ENCODE measurements at regions of chr22 and their contacts with region 1.

Region 1: DNA sequence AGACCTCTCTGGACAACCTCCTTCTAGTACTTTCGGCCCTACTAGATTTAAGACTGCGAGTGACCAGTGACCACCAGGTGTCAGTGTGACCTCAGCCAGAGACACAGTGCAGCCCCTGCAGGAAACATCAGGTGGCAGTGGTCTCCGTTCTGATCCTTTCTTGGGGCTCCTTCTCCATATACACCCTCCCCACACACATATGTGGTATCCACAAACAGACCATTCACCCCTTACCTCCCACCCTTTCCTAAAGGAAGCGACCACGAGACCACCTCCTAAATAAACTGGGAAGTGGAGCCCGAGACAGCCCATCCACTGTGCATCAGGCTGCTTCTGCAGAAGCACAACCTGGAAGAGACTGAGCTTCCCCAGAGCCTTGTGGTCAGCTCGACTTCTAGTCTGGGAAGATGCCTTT is 38.5 kb upstream of the CYP2D6 start:
- DNase-seq: peak; percentile 77
- H3K4me3 Mint-ChIP-seq: no peak overlapping the region
- H3K27ac Mint-ChIP-seq: no peak overlapping the region
- H3K4me1 Mint-ChIP-seq: peaks cover 22% of the 10 kb centered on the region
- H3K27me3 Mint-ChIP-seq: no peaks in the 10 kb centered on the region

Region 2: GRCh38 chr22:41983513-41984405 is 185.3 kb before region 1 on chr22:
- CTCF ChIA-PET with region 1: no interaction called
- POLR2A ChIA-PET with region 1: no interaction called
- DNase-seq: no peak
- H3K4me3 Mint-ChIP-seq: no peak overlapping the region
- H3K27ac Mint-ChIP-seq: no peak overlapping the region
- H3K4me1 Mint-ChIP-seq: no peaks in the 10 kb centered on the region
- H3K27me3 Mint-ChIP-seq: peaks cover 7% of the 10 kb centered on the region

Region 3: DNA sequence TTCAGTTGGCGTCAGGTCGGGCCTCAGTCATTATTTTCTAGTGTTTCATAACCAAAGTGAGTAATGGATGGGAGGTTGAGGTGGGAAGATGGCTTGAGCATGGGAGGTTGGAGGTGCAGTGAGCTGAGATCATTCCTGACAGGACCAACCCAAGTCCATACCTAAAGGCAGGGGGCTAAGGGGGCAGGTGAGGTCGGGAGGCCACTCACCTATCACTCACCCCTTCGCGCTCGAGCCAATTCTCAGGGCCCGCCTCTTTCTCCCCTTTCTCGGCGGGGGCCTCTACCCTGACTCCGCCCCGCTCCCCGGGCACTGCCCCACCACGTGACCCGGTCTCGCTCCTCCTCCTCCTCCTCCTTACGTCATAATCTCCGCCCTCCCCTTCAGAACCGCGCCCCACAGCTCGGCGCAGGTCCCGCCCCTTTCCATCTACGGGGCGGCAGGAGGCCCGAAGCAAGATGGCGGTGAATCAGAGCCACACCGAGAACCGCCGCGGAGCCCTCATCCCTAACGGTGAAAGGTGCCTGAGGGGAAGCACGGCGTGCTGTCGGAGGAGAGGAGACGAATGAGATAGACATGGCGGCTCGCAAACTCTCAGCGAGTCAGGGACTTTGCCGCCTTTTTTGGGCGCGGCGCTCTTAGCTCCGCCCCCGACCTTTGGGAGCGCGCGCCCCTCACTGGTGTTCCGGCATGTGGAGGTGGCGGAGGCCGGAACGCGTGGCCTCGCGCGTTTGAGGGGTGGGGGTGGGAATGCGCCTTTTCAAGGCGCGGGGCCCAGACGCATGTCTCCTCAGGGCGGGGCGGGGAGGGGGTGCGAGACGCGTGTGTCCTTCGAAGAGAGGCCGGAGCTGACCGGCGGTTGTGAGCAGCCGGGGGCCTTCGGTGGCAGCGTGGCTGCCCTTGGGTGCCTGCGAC is 170.4 kb before region 1 on chr22 and contains the start of gene WBP2NL:
- CTCF ChIA-PET with region 1: no interaction called
- POLR2A ChIA-PET with region 1: no interaction called
- DNase-seq: peak; percentile 92
- H3K4me3 Mint-ChIP-seq: peak within 1 kb of the TSS; percentile 98
- H3K27ac Mint-ChIP-seq: peak within 1 kb of the TSS; percentile 88
- H3K4me1 Mint-ChIP-seq: peaks cover 35% of the 10 kb centered on the region
- H3K27me3 Mint-ChIP-seq: peaks cover 2% of the 10 kb centered on the region
- total RNA-seq, gene WBP2NL: 2.0 to 2.3 TPM

Region 4: DNA sequence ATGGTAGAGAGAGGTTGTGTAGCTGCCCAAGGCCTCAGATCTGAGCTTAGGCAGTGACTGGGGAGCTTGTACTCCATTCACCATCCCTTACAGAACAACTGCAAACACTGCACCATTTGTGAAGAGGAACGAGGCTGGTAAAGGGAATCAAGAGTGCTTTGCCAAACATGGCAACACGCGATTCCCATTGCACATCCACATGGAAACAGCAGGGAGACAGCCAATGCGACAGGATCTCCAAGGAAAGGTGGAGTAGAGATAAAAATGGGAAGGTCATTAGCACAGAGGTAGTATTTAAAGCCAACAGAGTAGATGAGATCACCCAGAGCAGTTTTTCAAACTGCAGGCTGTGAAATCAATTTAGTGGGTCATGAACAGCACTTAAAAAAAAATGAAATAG is 59.4 kb after region 1 on chr22:
- CTCF ChIA-PET with region 1: no interaction called
- POLR2A ChIA-PET with region 1: no interaction called
- DNase-seq: no peak
- H3K4me3 Mint-ChIP-seq: no peak overlapping the region
- H3K27ac Mint-ChIP-seq: no peak overlapping the region
- H3K4me1 Mint-ChIP-seq: peaks cover 21% of the 10 kb centered on the region
- H3K27me3 Mint-ChIP-seq: no peaks in the 10 kb centered on the region

Region 5: DNA sequence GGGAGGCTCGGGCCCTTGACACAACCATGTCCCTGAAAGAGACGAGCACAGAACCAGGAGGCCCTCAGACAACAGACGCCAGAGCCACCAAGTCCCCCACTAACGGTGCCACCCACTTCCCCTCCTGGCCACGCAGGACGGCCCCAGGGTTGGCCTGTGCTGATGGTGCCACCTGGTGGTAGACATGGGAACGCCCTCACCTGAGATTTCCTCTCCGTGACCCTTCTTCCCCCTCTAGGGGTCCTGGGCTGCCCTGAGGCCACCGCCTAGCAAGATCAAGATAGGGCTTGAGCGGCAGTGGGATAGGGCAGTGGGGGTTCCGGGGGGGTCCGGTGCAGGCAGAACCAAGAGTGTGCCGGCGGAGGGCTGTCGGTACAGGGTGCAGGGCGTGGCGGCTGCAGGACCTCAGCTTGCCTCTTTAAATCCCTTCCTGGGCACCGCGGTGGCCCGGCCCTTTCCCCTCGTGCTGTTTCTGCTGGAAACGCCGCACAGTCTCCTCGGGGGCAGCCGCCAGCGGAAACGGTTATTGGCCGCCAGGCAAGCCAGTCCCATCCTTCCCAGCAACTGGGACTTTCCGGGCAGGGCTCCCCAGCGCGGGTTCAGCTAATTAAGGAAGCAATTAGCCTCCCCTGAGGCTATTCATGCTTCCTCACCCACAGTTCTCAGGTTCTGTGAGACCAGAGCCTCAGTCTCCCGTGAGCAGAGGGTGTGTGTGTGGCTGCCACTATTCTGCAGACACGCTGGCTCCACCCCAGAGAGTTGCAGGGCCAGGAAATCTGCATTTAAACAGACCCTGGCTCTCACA is 268.6 kb after region 1 on chr22:
- CTCF ChIA-PET with region 1: interaction called, 24 read pairs
- POLR2A ChIA-PET with region 1: no interaction called
- DNase-seq: peak; percentile 86
- H3K4me3 Mint-ChIP-seq: peak overlapping the region; percentile 79
- H3K27ac Mint-ChIP-seq: peak overlapping the region; percentile 61
- H3K4me1 Mint-ChIP-seq: peaks cover 27% of the 10 kb centered on the region
- H3K27me3 Mint-ChIP-seq: peaks cover 6% of the 10 kb centered on the region

Measured in activated CD4-positive, alpha-beta memory T cell treated with anti-CD3 and anti-CD28 coated beads, Interleukin-2, amount 10 ng/mL, durations not matched to agents 7 days and 5 days (primary cell).